Activated CD4-positive, alpha-beta memory T cell treated with anti-CD3 and anti-CD28 coated beads for 36 hours (primary cell): ENCODE measurements at regions of chr17 and their contacts with region 1.

Region 1: DNA sequence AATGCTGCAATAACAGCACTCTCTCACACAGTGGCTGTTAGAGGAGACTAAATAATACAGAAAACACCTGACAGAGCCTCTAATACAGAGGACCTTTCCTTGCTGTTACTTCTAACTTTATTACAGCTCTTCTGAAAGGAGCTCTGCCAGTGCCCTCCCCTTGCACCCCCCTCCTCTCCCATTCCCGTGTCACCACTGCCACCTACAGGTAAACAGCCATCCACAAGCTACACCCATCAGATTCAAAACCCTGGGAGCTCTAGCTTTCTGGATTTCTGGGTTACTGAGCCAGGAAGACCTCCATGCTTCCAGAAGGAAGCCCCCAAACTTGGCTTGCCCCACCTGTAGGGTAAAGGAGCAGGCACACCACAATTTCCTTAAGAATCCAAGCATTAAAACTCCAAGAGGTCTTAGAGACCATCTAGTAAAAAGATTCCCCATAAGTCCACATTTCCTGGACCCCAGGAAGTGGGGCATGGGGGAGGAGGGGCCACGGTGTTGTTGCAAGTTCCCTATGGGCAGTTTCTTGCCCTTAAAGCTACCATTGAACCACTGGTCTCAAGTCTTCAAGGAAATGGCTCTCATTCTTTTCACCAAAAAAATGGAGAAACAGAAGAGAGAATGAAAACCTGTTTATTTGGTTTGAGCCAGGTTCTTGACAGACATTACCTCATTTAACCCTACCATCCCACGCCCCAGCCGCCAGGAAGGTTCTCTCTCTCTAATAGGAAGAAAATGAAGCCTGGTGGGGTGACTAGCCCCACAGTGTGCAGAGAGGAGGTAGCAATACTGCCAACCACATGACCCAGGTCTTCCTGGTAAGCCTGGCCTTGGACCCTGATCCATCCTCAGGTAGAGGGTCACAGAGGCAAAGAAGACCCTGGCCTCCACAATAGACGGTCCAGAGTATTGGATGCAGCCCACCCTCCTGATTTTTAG is 52.8 kb downstream of the TOM1L2 start:
- DNase-seq: peak; percentile 78
- H3K4me3 Mint-ChIP-seq: no peak overlapping the region
- H3K27ac Mint-ChIP-seq: no peak overlapping the region
- H3K4me1 Mint-ChIP-seq: peaks cover 6% of the 10 kb centered on the region
- H3K27me3 Mint-ChIP-seq: no peaks in the 10 kb centered on the region

Region 2: GRCh38 chr17:17681187-17681848 is 238.1 kb before region 1 on chr17 and contains the start of gene RAI1:
- CTCF ChIA-PET with region 1: interaction called, 16 read pairs
- POLR2A ChIA-PET with region 1: interaction called, 3 read pairs
- intact Hi-C with region 1: loop called (anchors 1 kb)
- DNase-seq: peak; percentile 77
- H3K4me3 Mint-ChIP-seq: peak within 1 kb of the TSS; percentile 87
- H3K27ac Mint-ChIP-seq: peak within 1 kb of the TSS; percentile 78
- H3K4me1 Mint-ChIP-seq: peaks cover 24% of the 10 kb centered on the region
- H3K27me3 Mint-ChIP-seq: no peaks in the 10 kb centered on the region
- total RNA-seq, gene RAI1: 10.5 to 11.0 TPM

Region 3: GRCh38 chr17:17812211-17813057 is 107.0 kb before region 1 on chr17:
- CTCF ChIA-PET with region 1: interaction called, 14 read pairs
- POLR2A ChIA-PET with region 1: no interaction called
- intact Hi-C with region 1: loop called (anchors 1 kb)
- DNase-seq: peak; percentile 73
- H3K4me3 Mint-ChIP-seq: no peak overlapping the region
- H3K27ac Mint-ChIP-seq: peak overlapping the region; percentile 38
- H3K4me1 Mint-ChIP-seq: peaks cover 4% of the 10 kb centered on the region
- H3K27me3 Mint-ChIP-seq: no peaks in the 10 kb centered on the region

Region 4: DNA sequence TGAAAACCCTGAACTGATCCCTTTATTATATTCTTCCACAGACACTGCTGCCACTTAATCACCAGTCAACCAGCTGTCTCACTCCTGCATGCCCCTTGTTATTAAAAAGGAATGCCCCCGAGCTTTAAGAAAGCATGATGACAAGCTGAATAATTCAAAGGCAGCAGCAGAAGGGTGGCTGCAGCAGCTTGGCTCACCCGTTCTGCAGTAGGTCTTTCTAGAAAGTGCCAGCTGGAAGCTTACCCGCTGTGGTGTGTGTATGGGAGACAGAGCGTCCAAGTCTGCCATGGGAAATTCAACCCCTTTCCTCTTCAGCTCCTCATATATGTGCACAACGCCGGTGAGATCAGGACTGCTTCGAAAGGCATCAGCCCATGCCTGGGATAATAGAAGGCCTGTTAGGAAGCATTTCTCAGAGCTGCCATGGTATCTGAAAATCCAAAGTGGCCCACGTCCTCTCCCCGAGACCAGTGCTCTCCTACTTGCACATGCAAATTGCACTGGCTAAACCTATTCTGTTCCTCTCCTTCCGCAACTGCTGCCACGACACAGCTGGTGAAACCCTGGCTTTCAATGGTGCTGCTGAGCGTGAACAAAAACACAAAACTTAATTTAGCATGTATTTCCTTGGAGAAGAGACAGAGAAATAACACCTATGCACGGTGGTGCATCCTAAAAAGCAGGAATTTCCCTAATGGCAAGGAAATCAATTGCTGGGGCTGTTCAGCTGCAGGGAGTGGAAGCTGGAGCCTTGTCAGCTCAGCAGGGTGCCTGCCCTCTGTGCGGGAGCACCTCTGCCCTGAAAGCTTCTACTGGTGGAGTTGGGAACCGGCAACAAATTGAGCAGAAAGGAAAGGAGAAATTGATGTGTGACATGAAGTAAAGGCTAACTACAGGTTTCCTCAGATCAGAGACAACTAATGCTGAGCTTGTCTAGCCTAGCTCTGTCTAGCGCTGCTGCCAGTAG is 34.8 kb before region 1 on chr17:
- CTCF ChIA-PET with region 1: interaction called, 5 read pairs
- POLR2A ChIA-PET with region 1: no interaction called
- intact Hi-C with region 1: loop called (anchors 5 kb)
- DNase-seq: no peak
- H3K4me3 Mint-ChIP-seq: no peak overlapping the region
- H3K27ac Mint-ChIP-seq: no peak overlapping the region
- H3K4me1 Mint-ChIP-seq: no peaks in the 10 kb centered on the region
- H3K27me3 Mint-ChIP-seq: no peaks in the 10 kb centered on the region

Region 5: GRCh38 chr17:17906418-17907215 is 12.8 kb before region 1 on chr17:
- CTCF ChIA-PET with region 1: interaction called, 10 read pairs
- POLR2A ChIA-PET with region 1: no interaction called
- intact Hi-C with region 1: no loop called
- DNase-seq: no peak
- H3K4me3 Mint-ChIP-seq: no peak overlapping the region
- H3K27ac Mint-ChIP-seq: no peak overlapping the region
- H3K4me1 Mint-ChIP-seq: no peaks in the 10 kb centered on the region
- H3K27me3 Mint-ChIP-seq: no peaks in the 10 kb centered on the region

Region 6: GRCh38 chr17:17972126-17972951 is 52.9 kb after region 1 on chr17 and contains the starts of genes DRC3 and TOM1L2:
- CTCF ChIA-PET with region 1: interaction called, 12 read pairs
- POLR2A ChIA-PET with region 1: no interaction called
- intact Hi-C with region 1: no loop called
- DNase-seq: peak; percentile 100
- H3K4me3 Mint-ChIP-seq: peak within 1 kb of the TSS; percentile 91
- H3K27ac Mint-ChIP-seq: peak within 1 kb of the TSS; percentile 78
- H3K4me1 Mint-ChIP-seq: peaks cover 35% of the 10 kb centered on the region
- H3K27me3 Mint-ChIP-seq: no peaks in the 10 kb centered on the region
- total RNA-seq, gene DRC3: 0.34 to 0.52 TPM
- total RNA-seq, gene TOM1L2: 11.1 to 12.7 TPM

Region 7: GRCh38 chr17:18033442-18034099 is 114.1 kb after region 1 on chr17:
- CTCF ChIA-PET with region 1: interaction called, 23 read pairs
- POLR2A ChIA-PET with region 1: no interaction called
- intact Hi-C with region 1: no loop called
- DNase-seq: peak; percentile 62
- H3K4me3 Mint-ChIP-seq: no peak overlapping the region
- H3K27ac Mint-ChIP-seq: no peak overlapping the region
- H3K4me1 Mint-ChIP-seq: peaks cover 28% of the 10 kb centered on the region
- H3K27me3 Mint-ChIP-seq: no peaks in the 10 kb centered on the region